ENCODE measurements at regions of chr7 and their contacts with region 1.

Region 1: GRCh38 chr7:48637382-48637781 is 287.0 kb upstream of the CDC14C start:
- DNase-seq: no peak
- ATAC-seq: no peak

Region 2: DNA sequence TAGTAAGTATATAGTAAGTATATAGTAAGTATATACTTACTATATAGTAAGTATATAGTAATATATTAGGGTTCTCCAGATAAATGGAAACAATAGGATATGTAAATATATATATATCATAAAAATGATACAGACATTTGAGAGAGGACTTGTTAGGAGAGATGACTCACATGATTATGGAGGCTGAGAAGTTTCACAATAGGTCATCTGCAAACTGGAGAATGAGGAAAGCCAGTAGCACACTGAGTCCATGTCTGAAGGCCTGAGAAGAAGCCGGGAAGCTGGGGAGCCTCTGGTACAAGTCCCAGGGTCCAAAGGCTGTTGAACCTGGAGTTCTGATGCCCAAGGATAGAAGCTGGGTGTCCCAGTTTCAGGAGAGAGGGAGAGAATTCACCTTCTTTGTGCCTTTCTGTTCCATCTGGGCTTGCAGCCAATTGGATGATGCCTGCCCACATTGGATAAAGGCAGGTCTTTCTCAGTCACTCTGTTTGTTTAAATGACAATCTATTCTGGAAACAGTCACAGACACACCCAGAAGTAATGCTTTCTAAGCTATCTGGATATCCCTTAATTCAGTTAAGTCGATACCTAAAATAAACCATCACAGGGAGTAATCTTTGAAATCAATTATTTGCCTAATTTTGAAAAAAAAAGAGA is 81.5 kb after region 1 on chr7:
- intact Hi-C with region 1: loop called (anchors 10 kb)
- DNase-seq: no peak
- ATAC-seq: no peak